Psoas muscle (tissue), 8 donors: ENCODE measurements at regions of chr16 and their contacts with region 1.

Region 1: DNA sequence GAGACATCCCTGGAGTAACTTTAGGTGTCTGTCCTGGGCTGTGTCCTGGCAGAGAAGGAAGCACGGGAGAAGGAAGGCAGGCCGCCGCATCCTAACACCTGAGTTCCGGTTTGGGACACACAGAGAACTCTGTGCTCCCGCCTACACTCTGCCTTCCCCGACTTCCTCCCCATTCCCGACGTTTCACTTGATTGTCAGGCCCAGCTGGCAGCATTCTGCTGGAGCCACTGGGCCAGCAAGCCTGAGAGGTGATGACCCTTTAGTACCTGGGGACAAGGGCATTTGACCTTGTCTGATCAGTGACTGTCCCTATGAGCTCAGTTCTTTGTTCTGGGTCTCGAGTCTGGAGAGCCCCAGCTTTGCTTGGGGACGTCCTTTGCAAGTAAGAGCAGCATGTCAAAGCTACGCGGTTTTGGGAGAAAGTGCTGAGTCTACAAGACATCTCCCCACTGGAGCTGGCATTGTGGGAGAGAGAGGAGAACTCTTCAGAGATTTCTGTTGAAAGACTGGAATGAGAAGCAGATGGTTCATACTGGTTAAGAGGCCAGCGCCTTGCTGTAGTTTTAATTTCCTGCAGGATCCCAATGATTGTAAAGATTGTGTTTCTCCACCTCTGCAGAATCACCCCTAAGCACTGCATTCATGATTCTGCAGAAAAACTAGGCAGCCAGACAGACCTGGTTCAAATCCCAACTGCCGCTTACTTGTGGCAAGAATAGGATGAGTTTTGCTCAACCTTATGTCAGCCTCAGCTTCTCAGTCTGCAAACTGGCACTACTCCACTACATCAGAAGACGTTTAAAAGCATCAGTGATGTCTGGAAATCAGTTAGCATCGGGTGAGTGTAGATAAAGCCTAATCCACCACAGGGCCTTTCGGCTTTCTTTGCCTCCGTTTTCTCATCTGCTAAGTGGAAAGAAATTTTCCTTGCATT is 20.6 kb downstream of the ABAT start:
- DNase-seq: no peak
- ATAC-seq: no peak
- H3K4me3 ChIP-seq: no peak overlapping the region
- H3K27ac ChIP-seq: no peak overlapping the region
- H3K4me1 ChIP-seq: no peaks in the 10 kb centered on the region
- H3K27me3 ChIP-seq: no peaks in the 10 kb centered on the region
- CTCF ChIP-seq: no peak

Region 2: DNA sequence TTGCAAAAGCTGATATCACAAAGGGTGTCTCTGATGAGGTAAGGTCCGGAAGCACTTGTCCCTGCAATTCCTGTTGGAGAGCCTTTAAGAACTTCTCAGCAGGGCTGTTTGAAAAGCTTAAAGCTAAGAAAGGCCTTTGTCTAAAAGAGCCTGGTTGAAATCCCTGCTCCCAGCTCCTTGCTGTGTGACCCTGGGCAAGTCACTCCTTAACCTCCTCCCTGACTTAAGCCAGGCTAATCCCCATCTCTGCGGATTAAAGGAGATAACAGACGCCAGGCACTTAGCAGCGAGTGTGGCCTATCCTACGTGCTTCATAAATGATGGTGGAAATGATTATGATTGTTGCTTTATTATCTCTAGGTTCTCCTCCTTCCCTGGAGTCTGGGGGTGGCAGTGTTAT is 1730.4 kb before region 1 on chr16:
- intact Hi-C with region 1: loop called in 1 of 2 experiments (anchors 5 kb)
- DNase-seq: no peak
- ATAC-seq: no peak
- H3K4me3 ChIP-seq: no peak overlapping the region
- H3K27ac ChIP-seq: no peak overlapping the region
- H3K4me1 ChIP-seq: no peaks in the 10 kb centered on the region
- H3K27me3 ChIP-seq: no peaks in the 10 kb centered on the region
- CTCF ChIP-seq: no peak